CD8-positive, alpha-beta T cell (primary cell): ENCODE measurements at regions of chr6 and their contacts with region 1.

Region 1: DNA sequence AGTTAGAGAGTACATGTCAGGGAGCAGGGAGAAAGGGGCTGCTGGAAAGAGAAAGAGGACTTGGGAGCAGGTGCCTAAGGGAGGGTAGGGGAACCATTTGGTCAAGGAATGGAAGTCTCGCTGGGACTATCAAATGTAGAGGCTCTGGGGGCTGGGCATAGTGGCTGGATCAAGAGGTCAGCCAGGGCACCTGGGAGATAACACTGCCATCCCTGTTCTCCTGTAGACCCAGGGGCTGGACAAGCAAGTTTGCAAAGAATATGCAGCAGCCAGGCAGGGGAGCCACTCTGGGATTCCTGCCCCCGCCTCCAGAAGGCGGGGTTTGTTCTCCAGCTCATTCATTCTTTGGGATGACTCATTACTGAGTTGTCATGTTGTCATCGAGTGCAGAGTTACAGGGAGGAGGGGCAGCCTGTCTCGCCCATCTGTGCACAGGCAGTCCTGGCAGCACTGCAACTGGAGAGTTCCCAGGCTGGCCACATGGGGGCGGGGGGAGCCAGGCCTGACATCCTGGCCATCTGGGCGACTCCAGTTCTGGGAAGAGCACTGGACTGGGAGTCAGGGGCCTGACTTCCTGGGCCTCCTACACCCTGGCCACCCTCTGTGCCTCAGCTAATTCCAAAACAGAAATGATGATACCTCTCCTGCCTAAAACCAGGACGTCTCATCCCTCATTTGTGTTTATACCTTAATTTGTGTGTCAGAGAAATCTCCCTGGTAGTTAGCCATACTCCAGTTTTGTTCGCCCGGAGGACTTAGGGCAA is 28.2 kb upstream of the ZFAND3 start:
- DNase-seq: peak; percentile 44 to 84 (median 80)
- ATAC-seq: peak; percentile 99
- H3K4me3 ChIP-seq: no peak overlapping the region
- H3K4me3 Mint-ChIP-seq: no peak overlapping the region
- H3K27ac ChIP-seq: no peak overlapping the region
- H3K27ac Mint-ChIP-seq: no peak overlapping the region
- H3K4me1 ChIP-seq: peaks cover 7% of the 10 kb centered on the region
- H3K4me1 Mint-ChIP-seq: peaks cover 3% of the 10 kb centered on the region
- H3K27me3 ChIP-seq: no peaks in the 10 kb centered on the region
- H3K27me3 Mint-ChIP-seq: no peaks in the 10 kb centered on the region
- CTCF ChIP-seq: peak; percentile 66

Region 2: GRCh38 chr6:37838219-37838921 is 47.0 kb after region 1 on chr6:
- CTCF ChIA-PET with region 1: no interaction called
- POLR2A ChIA-PET with region 1: no interaction called
- intact Hi-C with region 1: no loop called
- DNase-seq: no peak
- ATAC-seq: no peak
- H3K4me3 ChIP-seq: no peak overlapping the region
- H3K4me3 Mint-ChIP-seq: no peak overlapping the region
- H3K27ac ChIP-seq: no peak overlapping the region
- H3K27ac Mint-ChIP-seq: no peak overlapping the region
- H3K4me1 ChIP-seq: peaks cover 9% of the 10 kb centered on the region
- H3K4me1 Mint-ChIP-seq: peaks cover 57% of the 10 kb centered on the region
- H3K27me3 ChIP-seq: no peaks in the 10 kb centered on the region
- H3K27me3 Mint-ChIP-seq: no peaks in the 10 kb centered on the region
- CTCF ChIP-seq: no peak

Region 3: DNA sequence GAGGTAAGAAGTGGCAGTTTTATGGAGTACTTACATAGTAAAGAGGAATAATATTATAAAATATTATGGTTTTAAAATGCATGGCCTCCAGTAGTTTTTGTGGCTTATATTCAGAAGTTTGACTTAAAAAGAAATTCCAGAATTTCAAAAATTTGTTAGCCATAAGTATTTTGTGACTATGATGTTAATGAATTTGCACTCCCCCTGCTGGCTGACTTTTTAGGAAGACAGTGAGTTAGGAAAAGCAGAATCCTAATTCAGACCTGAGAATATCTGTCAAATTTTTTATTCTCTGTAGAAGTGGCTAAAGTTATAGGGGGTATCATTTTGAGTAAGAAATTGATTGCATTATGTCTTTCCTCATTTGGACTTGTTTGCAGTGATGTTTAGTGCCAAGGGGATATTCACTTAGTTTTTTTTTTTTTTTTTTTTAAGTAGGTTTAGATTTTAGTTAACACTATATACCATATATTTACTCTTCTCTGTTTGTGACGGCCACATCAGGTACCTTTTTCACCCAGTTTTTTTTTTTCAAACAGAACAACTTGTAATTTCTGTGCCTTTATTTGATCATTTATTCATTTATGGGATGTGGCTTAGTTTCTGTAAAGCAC is 69.0 kb after region 1 on chr6:
- CTCF ChIA-PET with region 1: interaction called, 13 read pairs
- POLR2A ChIA-PET with region 1: no interaction called
- intact Hi-C with region 1: loop called (anchors 1 to 2 kb)
- DNase-seq: peak in 4 of 9 experiments; percentile 29 to 62 (median 41)
- ATAC-seq: no peak
- H3K4me3 ChIP-seq: no peak overlapping the region
- H3K4me3 Mint-ChIP-seq: no peak overlapping the region
- H3K27ac ChIP-seq: no peak overlapping the region
- H3K27ac Mint-ChIP-seq: no peak overlapping the region
- H3K4me1 ChIP-seq: peaks cover 7% of the 10 kb centered on the region
- H3K4me1 Mint-ChIP-seq: peaks cover 74% of the 10 kb centered on the region
- H3K27me3 ChIP-seq: no peaks in the 10 kb centered on the region
- H3K27me3 Mint-ChIP-seq: no peaks in the 10 kb centered on the region
- CTCF ChIP-seq: peak; percentile 39

Region 4: GRCh38 chr6:37897321-37897720 is 106.0 kb after region 1 on chr6:
- CTCF ChIA-PET with region 1: no interaction called
- POLR2A ChIA-PET with region 1: no interaction called
- intact Hi-C with region 1: no loop called
- DNase-seq: no peak
- ATAC-seq: no peak
- H3K4me3 ChIP-seq: no peak overlapping the region
- H3K4me3 Mint-ChIP-seq: no peak overlapping the region
- H3K27ac ChIP-seq: no peak overlapping the region
- H3K27ac Mint-ChIP-seq: no peak overlapping the region
- H3K4me1 ChIP-seq: peaks cover 15% of the 10 kb centered on the region
- H3K4me1 Mint-ChIP-seq: peaks cover 58% of the 10 kb centered on the region
- H3K27me3 ChIP-seq: no peaks in the 10 kb centered on the region
- H3K27me3 Mint-ChIP-seq: no peaks in the 10 kb centered on the region
- CTCF ChIP-seq: no peak